ENCODE measurements at regions of chr16 and their contacts with region 1.

Region 1: GRCh38 chr16:62102588-62102987 is 66.3 kb upstream of the CDH8 start:
- DNase-seq: no peak
- H3K4me3 ChIP-seq: no peak overlapping the region
- H3K27ac ChIP-seq: no peak overlapping the region
- H3K27me3 ChIP-seq: peaks cover 0 to 9% (median 0%) of the 10 kb centered on the region in 45 donors
- CTCF ChIP-seq: no peak

Region 2: GRCh38 chr16:61385392-61386071 is 717.1 kb before region 1 on chr16:
- intact Hi-C with region 1: loop called in 1 of 2 experiments (anchors 5 kb)
- DNase-seq: no peak
- H3K4me3 ChIP-seq: no peak overlapping the region
- H3K27ac ChIP-seq: no peak overlapping the region
- H3K27me3 ChIP-seq: no peaks in the 10 kb centered on the region
- CTCF ChIP-seq: no peak